ENCODE measurements at regions of chr6 and their contacts with region 1.

Region 1: DNA sequence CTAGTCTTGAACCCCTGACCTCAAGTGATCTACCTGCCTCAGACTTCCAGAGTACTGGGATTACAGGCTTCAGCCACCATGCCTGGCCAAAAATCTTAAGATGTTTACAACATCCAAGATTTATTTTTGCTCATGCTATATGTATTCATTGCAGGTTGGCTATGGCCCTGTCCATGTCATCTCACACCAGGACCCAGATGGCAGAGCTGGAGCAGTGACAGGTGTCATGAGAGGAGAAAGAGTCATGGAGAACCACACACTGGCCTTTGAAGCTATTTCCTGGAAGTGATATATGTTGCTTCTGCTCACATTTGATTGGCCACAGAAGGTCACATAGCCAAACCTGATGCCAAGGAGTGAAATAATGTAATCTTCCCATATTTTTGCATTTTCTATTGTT is 13.8 kb upstream of the DDR1 start:
- DNase-seq: no peak
- ATAC-seq: no peak
- H3K4me3 ChIP-seq: no peak overlapping the region
- H3K27ac ChIP-seq: no peak overlapping the region
- H3K4me1 ChIP-seq: peaks cover 4% of the 10 kb centered on the region
- H3K27me3 ChIP-seq: no peaks in the 10 kb centered on the region
- CTCF ChIP-seq: no peak
- POLR2A ChIP-seq: no peak

Region 2: DNA sequence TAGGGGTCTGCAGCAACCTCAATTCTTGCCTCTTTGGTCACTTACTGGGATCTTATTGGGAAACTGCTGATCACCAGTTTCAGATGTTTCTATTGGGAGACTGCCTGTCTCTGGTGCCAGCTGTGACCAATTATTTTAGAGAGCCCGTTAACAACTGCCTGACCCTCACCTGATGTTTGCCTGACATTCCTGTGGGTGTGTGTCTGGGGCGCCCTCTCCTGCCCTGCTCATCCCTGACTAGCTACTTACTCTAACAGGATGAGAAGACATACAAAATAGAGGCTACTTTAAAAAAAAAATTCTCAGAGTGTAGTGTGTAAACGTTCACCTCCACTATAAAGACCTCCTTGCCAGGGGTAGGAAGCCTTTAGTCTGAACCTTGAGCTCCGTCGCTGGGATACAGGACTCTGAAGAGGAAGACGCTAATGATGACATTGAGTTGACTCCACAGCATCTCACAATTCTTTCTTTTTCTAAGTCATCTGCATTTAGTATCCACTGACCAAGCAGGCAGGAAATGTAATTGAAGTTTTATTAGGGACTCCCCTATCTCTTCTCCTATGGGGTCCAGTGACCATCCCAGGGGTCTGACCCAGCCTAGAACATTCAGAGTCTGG is 40.8 kb before region 1 on chr6:
- intact Hi-C with region 1: loop called (anchors 5 kb)
- DNase-seq: no peak
- ATAC-seq: no peak
- H3K4me3 ChIP-seq: no peak overlapping the region
- H3K27ac ChIP-seq: no peak overlapping the region
- H3K4me1 ChIP-seq: peaks cover 15% of the 10 kb centered on the region
- H3K27me3 ChIP-seq: no peaks in the 10 kb centered on the region
- CTCF ChIP-seq: no peak
- POLR2A ChIP-seq: no peak